ENCODE measurements at regions of chr10 and their contacts with region 1.

Region 1: DNA sequence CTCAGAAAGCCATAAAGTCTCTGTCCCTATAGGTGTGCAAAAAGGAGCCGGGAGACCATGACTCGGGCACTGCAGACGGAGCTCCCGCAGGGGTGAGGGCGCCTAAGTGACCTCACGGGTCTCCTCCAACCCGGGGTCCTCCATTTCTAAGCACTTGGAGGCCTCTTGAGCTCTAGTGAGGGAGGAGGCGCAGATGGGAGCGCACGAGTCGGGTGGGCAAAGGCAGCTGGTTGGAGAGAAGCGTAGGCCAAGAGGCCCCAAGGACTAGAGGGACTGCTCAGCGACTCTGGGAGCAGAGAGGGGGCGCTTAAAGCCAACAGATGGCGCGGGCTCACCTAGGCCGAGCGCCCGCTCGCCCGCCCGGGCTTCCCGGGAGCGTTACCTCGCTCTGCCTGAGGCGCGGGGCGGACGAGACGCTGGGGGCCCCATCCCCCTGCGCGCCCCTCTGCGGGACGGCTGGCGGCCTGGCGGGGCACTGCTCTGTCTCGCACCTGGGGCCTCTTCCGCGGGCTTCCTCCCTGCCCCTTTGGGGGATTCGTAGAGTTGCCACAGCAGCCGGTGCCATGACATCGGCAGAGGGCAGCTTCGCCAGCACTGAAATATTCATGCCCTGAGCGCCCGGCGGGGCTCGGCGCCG is 518 bp upstream of the CDH23 start:
- DNase-seq: peak; percentile 82

Region 2: DNA sequence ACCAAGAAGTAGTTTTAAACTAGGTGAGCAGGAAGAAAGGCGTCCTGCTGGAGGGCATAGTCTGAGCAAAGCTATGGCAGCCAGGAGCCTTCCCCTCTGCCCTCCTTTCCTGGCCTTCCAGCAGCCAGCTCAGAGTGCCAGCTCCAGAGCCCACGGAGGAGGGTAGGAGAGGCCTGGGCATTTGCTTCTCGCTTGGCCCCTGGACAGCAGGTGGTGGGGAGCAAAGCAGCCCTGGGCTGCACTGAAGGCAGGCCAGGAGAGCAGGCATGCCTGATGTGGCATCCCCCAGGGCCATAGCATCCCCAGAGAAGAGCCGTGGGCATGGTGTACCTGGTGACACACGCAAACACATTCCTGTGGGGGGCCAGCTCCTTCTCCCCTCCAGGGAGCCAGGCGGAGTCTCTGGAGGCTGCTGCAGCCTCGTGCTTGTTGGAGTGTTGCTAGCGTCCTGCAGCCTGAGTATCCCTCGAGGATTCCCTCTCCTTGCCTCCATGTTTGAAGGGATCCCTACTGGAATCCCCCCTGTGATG is 44.4 kb after region 1 on chr10:
- intact Hi-C with region 1: loop called (anchors 2 kb)
- DNase-seq: no peak

Region 3: GRCh38 chr10:71486484-71487114 is 90.4 kb after region 1 on chr10:
- intact Hi-C with region 1: loop called (anchors 1 kb)
- DNase-seq: no peak

Region 4: DNA sequence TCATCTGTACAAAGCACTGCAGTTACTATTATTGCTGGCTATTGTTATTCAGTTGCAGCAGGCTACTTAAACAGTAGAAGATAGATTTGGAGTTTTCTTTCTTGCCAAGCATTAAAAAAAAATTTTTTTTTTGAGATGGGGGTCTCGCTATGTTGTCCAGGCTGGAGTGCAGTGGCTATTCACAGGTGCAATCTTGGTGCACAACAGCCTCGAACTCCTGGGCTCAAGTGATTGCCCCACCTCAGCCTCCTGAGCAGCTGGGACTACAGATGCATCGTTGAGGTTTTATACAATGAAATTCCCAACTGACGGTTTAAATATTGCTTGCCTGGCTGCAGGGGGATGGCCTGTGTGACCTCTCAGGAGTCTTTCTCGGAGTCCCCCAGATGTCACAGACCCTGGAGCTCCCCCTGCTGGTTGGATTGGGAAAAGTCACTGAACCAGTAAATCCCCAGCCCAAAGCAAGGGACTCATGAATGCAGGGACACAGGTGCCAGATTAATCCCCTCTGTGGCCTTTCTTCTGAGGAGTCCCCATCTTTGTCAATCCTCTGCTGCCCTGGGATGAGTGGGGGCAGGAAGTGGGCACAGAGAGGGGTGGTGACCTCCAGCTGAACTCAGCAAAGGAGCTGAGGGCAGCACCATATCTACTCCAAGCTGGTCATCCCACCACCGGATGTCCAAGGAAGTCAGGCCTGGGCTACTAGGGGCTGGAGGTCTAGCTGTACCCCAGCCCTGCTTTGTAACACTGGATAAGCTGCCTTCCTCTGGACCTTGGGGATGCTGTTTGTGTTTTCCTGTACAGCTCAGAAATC is 173.8 kb after region 1 on chr10:
- intact Hi-C with region 1: loop called (anchors 1 kb)
- DNase-seq: peak; percentile 81

Region 5: DNA sequence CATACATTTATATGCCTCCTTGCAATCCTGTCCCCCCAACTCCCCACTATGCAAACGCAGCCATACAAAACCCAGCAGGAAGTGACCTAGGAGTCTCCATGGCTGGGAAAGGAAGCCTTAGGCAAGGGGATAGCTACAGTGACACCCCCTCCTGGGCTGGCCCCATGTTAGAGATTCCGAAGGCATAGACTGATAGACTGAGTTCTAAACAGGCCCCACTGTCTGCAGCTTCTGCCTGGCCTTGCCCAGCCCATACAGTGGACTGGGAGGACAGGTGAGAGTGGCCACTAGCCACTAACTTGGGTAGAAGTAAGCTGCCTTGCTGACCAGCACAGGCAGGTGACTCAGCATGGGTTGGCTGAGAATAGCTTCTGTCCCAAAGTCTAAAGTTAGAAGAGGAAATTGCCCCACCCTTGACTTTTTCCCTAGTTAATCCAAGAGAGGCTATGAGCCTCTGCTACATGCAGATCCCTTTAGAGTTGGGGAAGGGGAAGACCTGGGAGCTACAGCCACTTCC is 217.1 kb after region 1 on chr10:
- intact Hi-C with region 1: loop called (anchors 2 kb)
- DNase-seq: no peak

Region 6: DNA sequence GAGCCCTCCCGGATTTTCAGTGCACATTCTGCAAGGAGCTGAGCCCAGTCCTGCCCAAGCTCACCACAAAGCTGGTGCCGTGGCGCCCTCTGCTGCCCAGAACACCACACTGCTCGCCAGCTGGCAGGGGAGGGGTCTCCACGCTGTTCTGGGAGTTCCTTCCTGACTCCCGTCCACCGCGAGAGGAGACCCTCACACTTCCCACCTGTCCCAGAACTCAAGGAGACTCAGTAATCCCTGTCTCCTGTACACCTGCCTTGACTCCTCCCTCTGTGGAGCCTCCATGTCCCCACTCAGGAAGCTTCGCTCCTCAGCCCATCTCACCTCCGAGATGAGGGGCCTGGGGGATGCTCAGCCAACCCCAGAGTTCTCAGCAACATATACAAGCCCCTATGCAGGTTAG is 312.1 kb after region 1 on chr10:
- intact Hi-C with region 1: loop called (anchors 5 kb)
- DNase-seq: peak; percentile 92